Naive thymus-derived CD4-positive, alpha-beta T cell (primary cell): ENCODE measurements at regions of chr11 and their contacts with region 1.

Region 1: GRCh38 chr11:88813233-88813915 is 252.4 kb downstream of the GRM5 start:
- DNase-seq: no peak
- ATAC-seq: no peak
- H3K4me3 ChIP-seq: no peak overlapping the region
- H3K4me3 Mint-ChIP-seq: peak overlapping the region in 3 of 10 donors; percentile 21 to 50 (median 33)
- H3K27ac ChIP-seq: no peak overlapping the region
- H3K27ac Mint-ChIP-seq: peak overlapping the region in 2 of 9 donors; percentile 34 to 43
- H3K4me1 ChIP-seq: peaks cover 0 to 2% of the 10 kb centered on the region in 2 donors
- H3K4me1 Mint-ChIP-seq: peaks cover 5 to 26% (median 13%) of the 10 kb centered on the region in 7 donors
- H3K27me3 ChIP-seq: no peaks in the 10 kb centered on the region
- H3K27me3 Mint-ChIP-seq: peaks cover 0 to 9% (median 0%) of the 10 kb centered on the region in 5 donors

Region 2: DNA sequence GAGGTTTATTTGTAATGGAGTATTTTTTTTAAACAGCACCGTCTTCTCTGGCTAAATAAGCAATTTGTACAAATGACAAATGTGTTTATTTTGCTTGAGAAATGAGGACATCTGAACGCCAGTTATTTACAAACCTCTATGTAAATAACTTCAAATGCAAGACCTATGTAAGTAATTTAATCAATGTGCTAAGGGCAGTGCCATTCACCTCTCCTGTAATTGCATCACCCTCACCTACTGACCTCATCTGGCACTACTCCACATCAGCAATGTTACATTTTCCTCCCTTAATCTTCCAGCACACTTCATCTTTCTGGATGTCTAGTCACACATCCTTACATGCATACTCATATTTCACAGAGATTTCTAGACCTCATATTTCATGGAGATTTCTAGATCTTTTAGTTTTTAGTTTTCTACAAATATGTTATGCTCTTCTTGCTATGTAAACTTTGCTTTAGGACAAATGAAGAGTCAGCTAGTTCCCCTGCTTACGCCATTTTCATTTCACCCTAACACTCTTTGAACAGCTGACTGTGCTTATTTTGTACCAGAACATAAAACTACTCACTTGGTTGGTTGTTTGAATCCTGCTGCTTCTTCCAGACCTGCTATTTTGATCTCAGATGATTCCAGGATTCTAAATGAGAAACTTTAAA is 13.8 kb after region 1 on chr11:
- CTCF ChIA-PET with region 1: no interaction called
- POLR2A ChIA-PET with region 1: no interaction called
- intact Hi-C with region 1: loop called (anchors 1 to 2 kb)
- DNase-seq: no peak
- ATAC-seq: no peak
- H3K4me3 ChIP-seq: no peak overlapping the region
- H3K4me3 Mint-ChIP-seq: no peak overlapping the region
- H3K27ac ChIP-seq: no peak overlapping the region
- H3K27ac Mint-ChIP-seq: no peak overlapping the region
- H3K4me1 ChIP-seq: no peaks in the 10 kb centered on the region
- H3K4me1 Mint-ChIP-seq: peaks cover 0 to 12% (median 4%) of the 10 kb centered on the region in 7 donors
- H3K27me3 ChIP-seq: no peaks in the 10 kb centered on the region
- H3K27me3 Mint-ChIP-seq: peaks cover 0 to 7% (median 0%) of the 10 kb centered on the region in 5 donors